ENCODE measurements at regions of chr17 and their contacts with region 1.

Region 1: GRCh38 chr17:35808962-35809854 is at the start of gene TAF15:
- DNase-seq: peak; percentile 98
- ATAC-seq: peak; percentile 94
- H3K4me3 Mint-ChIP-seq: peak within 1 kb of the TSS; percentile 85
- H3K27ac Mint-ChIP-seq: peak within 1 kb of the TSS; percentile 98
- H3K4me1 Mint-ChIP-seq: peaks cover 54% of the 10 kb centered on the region
- H3K27me3 Mint-ChIP-seq: no peaks in the 10 kb centered on the region
- total RNA-seq, gene TAF15: 336 to 341 TPM

Region 2: DNA sequence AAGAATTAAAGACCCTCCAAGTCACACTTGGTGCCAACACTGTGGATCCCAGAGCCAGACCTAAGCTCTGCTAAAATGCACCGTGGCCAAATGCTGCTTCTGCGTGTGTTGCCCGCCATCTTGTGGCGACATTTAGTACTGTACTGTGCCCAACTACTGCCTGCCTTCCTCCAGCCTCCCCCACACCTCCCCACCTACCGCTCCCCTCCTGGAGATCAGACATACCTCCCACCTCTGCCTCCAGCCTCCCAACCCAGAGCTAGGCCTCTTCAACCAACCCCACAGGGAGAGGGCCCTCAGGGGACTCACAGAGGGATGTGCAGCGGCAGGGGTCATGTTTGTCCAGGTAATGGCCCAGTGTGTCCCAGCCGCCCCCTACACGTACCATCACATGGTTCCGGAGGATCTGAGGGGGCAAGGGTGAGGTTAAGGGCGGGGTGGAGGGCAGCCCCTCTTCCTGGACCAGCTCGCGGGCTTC is 61.6 kb before region 1 on chr17:
- CTCF ChIA-PET with region 1: interaction called, 22 read pairs
- POLR2A ChIA-PET with region 1: no interaction called
- DNase-seq: peak; percentile 87
- ATAC-seq: peak; percentile 87
- H3K4me3 Mint-ChIP-seq: no peak overlapping the region
- H3K27ac Mint-ChIP-seq: no peak overlapping the region
- H3K4me1 Mint-ChIP-seq: peaks cover 9% of the 10 kb centered on the region
- H3K27me3 Mint-ChIP-seq: peaks cover 31% of the 10 kb centered on the region

Region 3: DNA sequence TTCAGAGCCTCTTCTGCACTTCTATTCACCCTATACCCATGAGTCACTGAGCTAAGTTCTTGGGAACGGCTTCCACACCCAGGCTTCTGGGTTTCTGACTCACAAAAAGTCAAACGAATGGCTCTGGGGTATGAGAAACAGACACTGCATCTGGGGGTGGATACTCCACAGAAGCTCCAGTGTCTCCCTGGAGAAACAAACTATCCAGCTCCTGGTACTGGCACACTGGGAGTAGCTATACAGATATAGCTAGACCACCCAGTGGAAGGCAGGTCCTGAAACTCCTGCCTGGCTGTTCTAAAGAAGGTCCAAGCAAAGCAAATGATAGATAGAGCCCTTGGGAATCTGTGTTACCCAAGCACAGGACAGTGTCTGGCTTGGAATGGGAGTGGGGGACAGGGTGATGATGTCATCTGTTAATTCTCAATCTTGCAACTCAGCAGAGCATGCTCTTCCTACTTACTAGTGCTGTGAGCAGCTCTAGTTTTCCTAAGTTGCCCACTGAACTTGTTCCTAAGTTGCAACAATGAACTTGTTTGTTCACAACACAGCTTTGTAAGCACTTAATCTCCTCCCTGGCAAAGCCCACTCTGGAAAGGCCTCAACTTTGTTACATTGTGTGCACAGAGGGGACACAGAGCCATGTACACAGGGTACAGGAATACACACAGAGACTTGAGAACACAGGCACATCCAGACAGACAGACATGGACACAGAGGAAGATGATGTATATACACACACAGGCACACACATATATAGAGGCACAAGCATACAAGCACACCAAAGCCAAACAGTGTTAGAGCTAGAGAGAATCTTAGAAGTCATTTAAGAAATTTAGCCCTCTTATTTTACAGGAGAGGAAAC is 20.5 kb before region 1 on chr17:
- CTCF ChIA-PET with region 1: interaction called, 27 read pairs
- POLR2A ChIA-PET with region 1: interaction called, 10 read pairs
- DNase-seq: no peak
- ATAC-seq: no peak
- H3K4me3 Mint-ChIP-seq: no peak overlapping the region
- H3K27ac Mint-ChIP-seq: no peak overlapping the region
- H3K4me1 Mint-ChIP-seq: peaks cover 7% of the 10 kb centered on the region
- H3K27me3 Mint-ChIP-seq: peaks cover 24% of the 10 kb centered on the region

Region 4: DNA sequence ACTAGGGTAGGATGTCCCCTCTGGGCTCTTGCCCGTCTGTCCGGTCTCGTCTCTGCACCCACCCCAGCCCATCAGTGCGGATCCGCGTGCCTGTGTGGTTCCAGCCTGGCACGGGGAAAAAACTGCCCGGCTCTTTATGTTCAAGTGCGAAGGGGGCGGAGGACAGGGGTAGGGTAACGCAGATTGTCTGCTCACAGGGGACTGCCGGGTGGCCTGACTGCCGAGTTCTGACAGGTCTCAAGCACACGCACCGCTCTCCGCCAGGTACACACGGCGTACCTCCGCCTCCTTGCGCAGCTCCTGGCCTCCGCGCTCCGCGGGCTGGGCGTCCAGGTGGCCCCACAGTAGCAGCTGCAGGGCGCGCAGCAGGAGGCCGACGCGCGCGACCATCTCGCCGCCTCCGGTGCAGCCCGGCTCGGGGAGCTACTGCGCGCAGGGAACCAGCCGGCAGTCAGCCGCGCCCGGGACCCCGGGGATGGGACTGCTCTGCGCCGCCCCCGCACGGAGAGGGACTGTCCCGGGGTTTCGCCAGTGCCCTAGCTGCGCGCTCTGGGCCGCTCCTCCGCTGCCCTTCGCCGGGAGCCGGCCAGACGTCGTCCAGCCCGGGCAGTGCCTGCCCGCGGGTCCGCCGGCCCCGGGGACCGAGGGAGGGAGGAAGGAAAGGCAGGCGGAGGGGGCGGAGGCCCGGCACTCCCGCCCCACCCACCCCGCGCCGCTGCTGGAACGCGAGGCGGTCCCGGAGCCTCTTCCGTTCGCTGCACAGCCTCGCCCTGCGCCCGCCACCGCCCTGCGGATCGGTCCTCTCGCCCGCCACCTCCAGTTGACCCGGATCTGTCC is 14.0 kb before region 1 on chr17 and contains the start of gene MMP28:
- CTCF ChIA-PET with region 1: interaction called, 27 read pairs
- POLR2A ChIA-PET with region 1: interaction called, 8 read pairs
- DNase-seq: peak; percentile 53
- ATAC-seq: peak; percentile 88
- H3K4me3 Mint-ChIP-seq: peak within 1 kb of the TSS; percentile 75
- H3K27ac Mint-ChIP-seq: no peak within 1 kb of the TSS
- H3K4me1 Mint-ChIP-seq: peaks cover 15% of the 10 kb centered on the region
- H3K27me3 Mint-ChIP-seq: peaks cover 53% of the 10 kb centered on the region
- total RNA-seq, gene MMP28: not detected

Region 5: GRCh38 chr17:35825206-35825605 is 16.0 kb after region 1 on chr17:
- CTCF ChIA-PET with region 1: interaction called, 12 read pairs
- POLR2A ChIA-PET with region 1: interaction called, 28 read pairs
- DNase-seq: no peak
- ATAC-seq: no peak
- H3K4me3 Mint-ChIP-seq: no peak overlapping the region
- H3K27ac Mint-ChIP-seq: no peak overlapping the region
- H3K4me1 Mint-ChIP-seq: peaks cover 4% of the 10 kb centered on the region
- H3K27me3 Mint-ChIP-seq: no peaks in the 10 kb centered on the region

Region 6: DNA sequence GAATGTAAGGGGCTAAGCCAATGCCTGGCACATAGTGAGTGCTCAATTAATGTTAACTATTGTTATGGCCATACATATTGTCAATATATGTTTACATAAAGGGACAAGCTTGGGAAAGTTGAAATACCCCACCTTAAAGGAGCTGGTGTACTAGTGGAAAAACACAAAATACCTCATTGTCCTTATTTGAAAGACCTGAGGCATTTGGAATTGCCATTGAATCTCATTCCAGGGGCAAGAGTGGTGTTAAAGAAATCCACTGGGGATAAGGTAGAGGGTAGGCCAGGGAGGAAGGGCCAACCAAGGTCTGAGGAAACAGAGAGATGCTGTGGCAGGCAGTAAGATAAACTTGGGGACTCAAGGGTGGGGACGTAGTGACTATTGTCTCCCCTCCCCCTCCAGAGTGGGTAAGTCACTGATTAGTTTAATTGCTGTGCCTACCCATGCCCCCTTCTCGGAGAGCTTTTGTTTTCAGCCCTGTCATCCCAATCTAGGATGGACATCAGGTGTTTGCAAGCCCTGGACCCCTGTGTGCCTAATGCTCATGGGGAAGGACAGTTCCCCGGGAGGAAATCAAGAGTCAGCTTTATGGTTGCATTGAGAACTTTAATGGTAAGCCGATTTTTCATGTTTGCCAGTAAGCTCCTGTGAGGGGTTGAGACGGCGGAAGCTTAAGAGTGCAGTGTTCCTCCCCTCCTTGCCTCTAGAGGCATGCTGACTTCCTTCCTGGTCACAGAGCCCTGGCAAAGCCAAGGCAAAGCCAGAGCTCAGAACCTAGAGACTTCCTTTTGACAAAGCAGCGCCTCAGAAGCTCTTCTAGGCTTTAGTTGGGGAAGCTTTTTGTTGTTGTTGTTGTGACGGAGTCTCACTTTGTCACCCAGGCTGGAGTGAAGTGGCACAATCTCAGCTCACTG is 62.0 kb after region 1 on chr17:
- CTCF ChIA-PET with region 1: interaction called, 4 read pairs
- POLR2A ChIA-PET with region 1: interaction called, 12 read pairs
- DNase-seq: peak; percentile 68
- ATAC-seq: peak; percentile 61
- H3K4me3 Mint-ChIP-seq: no peak overlapping the region
- H3K27ac Mint-ChIP-seq: peak overlapping the region; percentile 69
- H3K4me1 Mint-ChIP-seq: peaks cover 65% of the 10 kb centered on the region
- H3K27me3 Mint-ChIP-seq: no peaks in the 10 kb centered on the region

Region 7: GRCh38 chr17:35930211-35931065 is 121.2 kb after region 1 on chr17 and contains the start of gene RDM1:
- CTCF ChIA-PET with region 1: interaction called, 10 read pairs
- POLR2A ChIA-PET with region 1: interaction called, 16 read pairs
- DNase-seq: peak; percentile 94
- ATAC-seq: peak; percentile 98
- H3K4me3 Mint-ChIP-seq: peak within 1 kb of the TSS; percentile 86
- H3K27ac Mint-ChIP-seq: peak within 1 kb of the TSS; percentile 85
- H3K4me1 Mint-ChIP-seq: peaks cover 37% of the 10 kb centered on the region
- H3K27me3 Mint-ChIP-seq: peaks cover 8% of the 10 kb centered on the region
- total RNA-seq, gene RDM1: 13.9 to 14.4 TPM

Measured in activated CD8-positive, alpha-beta T cell treated with anti-CD3 and anti-CD28 coated beads, Interleukin-2, amount 10 ng/mL, durations not matched to agents 7 days and 5 days (primary cell).